Calu3 (cell line): ENCODE measurements at regions of chr2 and their contacts with region 1.

Region 1: GRCh38 chr2:171735991-171736710 is 48.9 kb downstream of the DYNC1I2 start:
- DNase-seq: no peak
- H3K4me3 Mint-ChIP-seq: no peak overlapping the region
- H3K27ac Mint-ChIP-seq: no peak overlapping the region
- H3K4me1 Mint-ChIP-seq: peaks cover 10% of the 10 kb centered on the region
- H3K27me3 Mint-ChIP-seq: no peaks in the 10 kb centered on the region
- CTCF ChIP-seq: no peak

Region 2: GRCh38 chr2:171703574-171704347 is 32.4 kb before region 1 on chr2:
- CTCF ChIA-PET with region 1: no interaction called
- intact Hi-C with region 1: loop called (anchors 5 kb)
- DNase-seq: no peak
- H3K4me3 Mint-ChIP-seq: no peak overlapping the region
- H3K27ac Mint-ChIP-seq: no peak overlapping the region
- H3K4me1 Mint-ChIP-seq: no peaks in the 10 kb centered on the region
- H3K27me3 Mint-ChIP-seq: no peaks in the 10 kb centered on the region
- CTCF ChIP-seq: peak; percentile 23

Region 3: DNA sequence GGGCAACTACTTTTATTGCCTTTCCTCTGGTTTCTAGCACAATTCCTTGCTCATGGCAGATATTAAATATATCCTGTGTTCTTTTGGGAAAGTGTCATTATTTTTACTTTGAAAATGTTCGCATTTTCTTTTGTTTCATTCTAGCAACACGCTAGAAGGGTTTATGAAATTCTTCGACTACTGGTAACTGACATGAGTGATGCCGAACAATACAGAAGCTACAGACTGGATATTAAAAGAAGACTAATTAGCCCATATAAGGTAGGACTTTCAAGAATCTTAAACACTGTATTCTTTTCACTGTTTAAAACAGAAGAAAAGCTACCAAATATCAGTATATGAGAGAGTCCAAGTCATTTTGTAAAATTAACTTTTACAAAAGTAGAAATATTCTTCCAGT is 243.0 kb after region 1 on chr2:
- CTCF ChIA-PET with region 1: no interaction called
- intact Hi-C with region 1: no loop called
- DNase-seq: no peak
- H3K4me3 Mint-ChIP-seq: no peak overlapping the region
- H3K27ac Mint-ChIP-seq: no peak overlapping the region
- H3K4me1 Mint-ChIP-seq: no peaks in the 10 kb centered on the region
- H3K27me3 Mint-ChIP-seq: no peaks in the 10 kb centered on the region
- CTCF ChIP-seq: no peak